ENCODE measurements at regions of chr1 and their contacts with region 1.

Region 1: DNA sequence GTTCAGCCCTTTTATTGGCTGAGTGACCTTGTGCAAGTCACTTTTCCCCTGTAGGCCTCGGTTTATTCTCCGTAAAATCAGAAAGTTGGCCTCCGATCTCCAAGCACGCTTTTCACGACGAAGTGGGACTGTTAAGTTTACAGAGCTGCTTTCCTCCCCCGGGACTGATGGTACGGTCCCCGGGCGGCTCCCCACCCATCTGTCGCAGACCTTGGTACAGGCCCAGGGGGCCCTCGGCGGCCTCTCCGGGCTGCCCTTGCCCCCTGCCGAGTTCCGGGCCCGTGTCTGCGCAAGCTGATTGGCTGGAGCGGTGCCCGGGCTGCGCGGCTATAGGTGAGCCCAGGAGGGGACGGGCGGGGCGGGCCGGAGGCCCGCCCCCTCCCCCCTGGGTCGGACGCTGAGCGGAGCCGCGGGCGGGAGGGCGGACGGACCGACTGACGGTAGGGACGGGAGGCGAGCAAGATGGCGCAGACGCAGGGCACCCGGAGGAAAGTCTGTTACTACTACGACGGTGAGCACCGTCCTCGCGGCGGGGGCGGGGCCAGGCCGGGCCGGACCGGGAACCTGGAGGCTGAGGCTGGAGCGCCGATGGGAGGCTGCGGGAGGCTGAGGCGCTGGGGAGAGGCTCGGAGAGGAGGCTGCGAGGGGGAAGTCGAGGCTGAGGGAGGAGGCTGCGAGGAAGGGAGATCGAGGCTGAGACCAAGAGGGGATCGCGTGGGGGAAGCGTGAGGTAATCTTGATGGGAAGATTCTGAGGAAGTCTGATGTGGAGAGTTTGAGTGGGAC is at the start of gene HDAC1:
- DNase-seq: peak; percentile 98
- H3K4me3 Mint-ChIP-seq: peak within 1 kb of the TSS; percentile 91
- H3K27ac Mint-ChIP-seq: peak within 1 kb of the TSS; percentile 84
- H3K4me1 Mint-ChIP-seq: peaks cover 53% of the 10 kb centered on the region
- H3K27me3 Mint-ChIP-seq: no peaks in the 10 kb centered on the region
- total RNA-seq, gene HDAC1: 180 to 185 TPM

Region 2: GRCh38 chr1:32321712-32322291 is 29.9 kb after region 1 on chr1:
- CTCF ChIA-PET with region 1: interaction called, 9 read pairs
- POLR2A ChIA-PET with region 1: interaction called, 18 read pairs
- DNase-seq: peak; percentile 53
- H3K4me3 Mint-ChIP-seq: peak overlapping the region; percentile 57
- H3K27ac Mint-ChIP-seq: peak overlapping the region; percentile 91
- H3K4me1 Mint-ChIP-seq: peaks cover 58% of the 10 kb centered on the region
- H3K27me3 Mint-ChIP-seq: no peaks in the 10 kb centered on the region